Posterior vena cava (tissue), 2 donors: ENCODE measurements at regions of chr11 and their contacts with region 1.

Region 1: DNA sequence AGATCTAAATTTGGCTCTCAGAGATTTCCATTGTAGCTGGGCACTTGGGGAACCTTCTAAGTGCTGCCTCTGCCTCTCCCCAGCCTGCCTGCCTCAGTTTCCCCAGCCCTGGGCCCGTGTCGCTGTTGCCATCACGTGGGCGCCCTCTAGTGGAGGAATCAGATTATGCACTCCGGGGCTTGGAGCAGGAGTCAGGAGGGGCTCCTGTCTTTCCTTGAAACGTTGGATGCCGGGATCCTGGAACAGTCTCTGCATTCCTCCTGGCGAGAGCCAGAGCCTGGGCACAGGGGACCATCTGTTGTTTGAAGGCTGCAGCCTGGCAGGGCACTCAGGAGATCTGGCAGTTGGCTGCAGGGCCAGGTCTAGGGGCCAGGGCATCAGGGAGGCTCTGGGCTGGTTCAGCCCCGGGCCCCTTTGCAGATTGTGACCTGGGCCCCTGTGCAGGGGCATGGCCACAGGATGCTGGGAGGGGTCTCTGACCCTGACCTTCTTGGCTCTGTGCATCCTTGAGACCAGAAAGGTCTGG is 71.6 kb downstream of the LRP5 start:
- DNase-seq: no peak

Region 2: DNA sequence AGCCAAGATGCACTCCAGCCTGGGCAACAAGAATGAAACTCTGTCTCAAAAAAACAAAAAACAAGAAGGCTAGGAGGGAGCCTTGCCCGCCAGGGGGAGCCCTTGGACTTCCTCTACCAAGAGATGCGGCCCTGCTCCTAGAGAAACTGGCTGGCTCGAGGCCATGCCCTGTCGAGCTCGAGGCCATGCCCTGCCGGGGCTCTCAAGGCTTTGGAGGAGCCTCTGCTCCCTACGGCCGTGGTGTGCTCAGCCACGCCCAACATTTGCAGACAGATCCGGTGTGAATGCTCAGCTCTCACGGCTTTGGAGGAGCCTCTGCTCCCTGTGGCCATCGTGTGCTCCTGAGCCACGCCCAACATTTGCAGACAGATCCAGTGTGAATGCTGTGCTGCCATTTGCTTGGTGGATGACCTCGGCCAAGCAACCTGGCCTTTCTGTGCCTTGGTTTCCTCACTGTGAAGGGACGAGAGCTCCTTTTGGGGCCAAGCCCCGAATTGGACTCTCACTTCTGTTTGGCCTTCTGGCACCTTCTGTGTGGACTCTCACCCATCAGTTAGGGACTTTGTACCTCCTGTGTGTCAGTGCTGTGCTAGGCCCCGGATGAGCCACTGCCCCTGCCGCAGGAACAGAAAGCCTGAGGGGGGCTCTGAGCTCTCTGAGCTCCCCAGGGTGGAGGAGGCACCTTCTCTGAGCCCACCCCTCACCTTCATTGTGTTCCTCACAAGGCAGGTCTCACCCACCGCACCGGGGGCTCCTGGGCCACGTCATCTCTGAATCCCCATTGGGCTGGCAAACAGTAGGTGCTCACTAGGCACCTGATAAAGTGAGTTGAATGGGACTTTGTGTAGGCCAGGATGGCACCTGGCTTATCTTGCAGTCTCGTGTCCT is 126.3 kb before region 1 on chr11:
- intact Hi-C with region 1: loop called (anchors 2 to 5 kb)
- DNase-seq: peak; percentile 99

Region 3: DNA sequence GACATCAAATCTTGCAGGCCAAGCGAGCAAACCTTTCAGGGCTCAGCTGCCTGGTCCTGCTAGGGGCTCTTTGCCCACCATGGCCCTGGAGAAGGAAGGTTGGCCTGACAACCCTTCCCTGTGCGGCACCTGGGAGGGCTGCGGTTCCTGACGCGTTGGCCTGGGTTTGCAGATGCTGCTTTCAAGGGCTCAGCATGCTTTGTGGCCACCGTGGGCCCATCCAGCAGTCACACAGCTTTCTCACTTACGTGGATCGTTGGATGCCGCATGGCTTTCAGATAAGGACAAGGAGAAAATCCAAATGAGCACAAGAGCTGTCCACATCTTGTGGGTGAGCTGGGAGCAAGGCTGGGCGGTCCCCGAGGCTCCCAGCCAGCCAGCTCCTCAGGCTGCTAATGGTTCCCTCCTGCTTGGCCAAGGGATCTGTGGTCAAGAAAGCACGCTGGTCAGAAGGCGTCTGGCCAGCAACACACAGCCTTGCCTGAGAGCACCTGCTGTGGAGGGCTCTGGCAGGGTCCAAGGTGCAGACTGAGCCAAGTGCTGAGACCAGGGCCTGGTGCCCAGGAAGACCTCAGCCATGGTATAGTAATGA is 120.5 kb before region 1 on chr11:
- intact Hi-C with region 1: loop called in 1 of 2 experiments (anchors 5 kb)
- DNase-seq: peak; percentile 78

Region 4: GRCh38 chr11:68312117-68312779 is 71.8 kb before region 1 on chr11 and contains the start of gene LRP5:
- intact Hi-C with region 1: loop called in 1 of 2 experiments (anchors 5 kb)
- DNase-seq: no peak
- total RNA-seq, gene LRP5: 46.2 to 48.5 TPM